ENCODE measurements at regions of chr3 and their contacts with region 1.

Region 1: DNA sequence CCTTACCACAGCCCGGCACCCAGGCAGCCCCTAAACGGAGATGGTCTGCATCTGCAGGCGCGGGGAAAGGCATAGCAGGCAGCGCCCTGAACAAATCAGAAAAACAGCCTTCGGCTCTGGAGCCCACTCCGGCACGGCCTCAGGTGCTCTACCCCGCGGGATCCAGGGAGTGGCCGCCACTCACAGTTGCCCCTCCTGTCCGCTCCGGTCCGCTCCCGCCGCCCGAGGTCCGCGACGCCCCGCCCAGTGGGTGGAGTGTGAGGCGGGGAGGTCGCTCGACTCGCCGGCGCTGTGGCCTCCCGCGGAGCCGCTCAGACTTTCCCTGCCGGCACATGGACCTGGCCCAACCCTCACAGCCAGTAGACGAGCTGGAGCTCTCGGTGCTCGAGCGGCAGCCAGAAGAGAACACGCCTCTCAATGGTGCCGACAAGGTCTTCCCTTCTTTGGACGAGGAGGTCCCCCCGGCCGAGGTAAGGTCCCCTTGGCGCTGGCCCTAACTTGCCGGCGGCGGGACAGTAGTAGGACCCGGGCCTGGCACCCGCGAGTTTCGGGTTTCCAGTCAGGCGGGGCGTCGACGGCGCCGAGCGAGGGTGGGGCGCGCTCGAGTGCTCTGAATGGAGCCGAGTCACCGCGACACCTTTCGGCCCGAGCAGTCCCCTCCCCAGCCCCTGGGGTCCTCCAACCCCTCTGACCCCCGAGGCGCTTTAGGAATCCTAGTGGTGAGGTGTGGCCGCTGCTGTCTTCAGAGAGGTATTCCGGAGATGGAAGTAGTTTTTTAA is at the start of gene C3orf52:
- DNase-seq: peak; percentile 6 to 70 (median 54)
- ATAC-seq: peak; percentile 84
- H3K4me3 ChIP-seq: peak within 1 kb of the TSS; percentile 65 to 72
- H3K4me3 Mint-ChIP-seq: peak within 1 kb of the TSS; percentile 85
- H3K27ac ChIP-seq: no peak within 1 kb of the TSS
- H3K27ac Mint-ChIP-seq: peak within 1 kb of the TSS; percentile 52
- H3K4me1 ChIP-seq: peaks cover 9% of the 10 kb centered on the region
- H3K4me1 Mint-ChIP-seq: peaks cover 30% of the 10 kb centered on the region
- H3K27me3 ChIP-seq: no peaks in the 10 kb centered on the region
- H3K27me3 Mint-ChIP-seq: peaks cover 13% of the 10 kb centered on the region
- CTCF ChIP-seq: no peak
- total RNA-seq, gene C3orf52: 0.19 to 0.78 TPM

Region 2: DNA sequence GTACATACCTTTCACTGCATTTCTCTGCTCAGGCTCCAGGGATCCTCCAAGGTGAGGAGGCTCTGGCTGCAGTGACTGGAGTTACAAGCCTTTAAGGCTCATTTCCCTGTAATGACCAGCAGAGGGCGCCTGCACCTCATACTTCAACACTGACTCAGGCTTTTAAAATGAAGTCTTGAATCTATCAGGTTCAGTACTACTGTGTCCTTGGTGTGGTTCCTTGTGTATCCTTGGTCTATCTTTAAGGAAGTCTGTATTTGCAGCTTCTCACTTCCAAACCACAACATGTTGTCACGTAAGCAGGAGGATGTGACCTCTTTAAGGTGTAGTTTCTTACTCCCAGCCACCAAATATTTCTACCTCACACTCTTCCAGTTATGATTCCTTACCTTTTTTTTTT is 368.7 kb before region 1 on chr3:
- CTCF ChIA-PET with region 1: no interaction called
- POLR2A ChIA-PET with region 1: no interaction called
- intact Hi-C with region 1: no loop called
- DNase-seq: peak; percentile 27 to 83 (median 69)
- ATAC-seq: peak; percentile 90
- H3K4me3 ChIP-seq: no peak overlapping the region
- H3K4me3 Mint-ChIP-seq: no peak overlapping the region
- H3K27ac ChIP-seq: no peak overlapping the region
- H3K27ac Mint-ChIP-seq: no peak overlapping the region
- H3K4me1 ChIP-seq: no peaks in the 10 kb centered on the region
- H3K4me1 Mint-ChIP-seq: peaks cover 3% of the 10 kb centered on the region
- H3K27me3 ChIP-seq: no peaks in the 10 kb centered on the region
- H3K27me3 Mint-ChIP-seq: no peaks in the 10 kb centered on the region
- CTCF ChIP-seq: peak; percentile 77

Region 3: GRCh38 chr3:112074721-112075497 is 11.4 kb before region 1 on chr3:
- CTCF ChIA-PET with region 1: interaction called, 3 read pairs
- POLR2A ChIA-PET with region 1: interaction called, 3 read pairs
- intact Hi-C with region 1: loop called in 1 of 2 experiments (anchors 1 kb)
- DNase-seq: peak in 7 of 9 experiments; percentile 7 to 62 (median 40)
- ATAC-seq: peak; percentile 85
- H3K4me3 ChIP-seq: no peak overlapping the region
- H3K4me3 Mint-ChIP-seq: peak overlapping the region; percentile 22
- H3K27ac ChIP-seq: peak overlapping the region in 1 of 2 experiments; percentile 23
- H3K27ac Mint-ChIP-seq: peak overlapping the region; percentile 78
- H3K4me1 ChIP-seq: peaks cover 19% of the 10 kb centered on the region
- H3K4me1 Mint-ChIP-seq: peaks cover 46% of the 10 kb centered on the region
- H3K27me3 ChIP-seq: no peaks in the 10 kb centered on the region
- H3K27me3 Mint-ChIP-seq: peaks cover 2% of the 10 kb centered on the region
- CTCF ChIP-seq: no peak

Measured in CD8-positive, alpha-beta T cell (primary cell).